Aorta (tissue), 5 donors: ENCODE measurements at regions of chr5 and their contacts with region 1.

Region 1: DNA sequence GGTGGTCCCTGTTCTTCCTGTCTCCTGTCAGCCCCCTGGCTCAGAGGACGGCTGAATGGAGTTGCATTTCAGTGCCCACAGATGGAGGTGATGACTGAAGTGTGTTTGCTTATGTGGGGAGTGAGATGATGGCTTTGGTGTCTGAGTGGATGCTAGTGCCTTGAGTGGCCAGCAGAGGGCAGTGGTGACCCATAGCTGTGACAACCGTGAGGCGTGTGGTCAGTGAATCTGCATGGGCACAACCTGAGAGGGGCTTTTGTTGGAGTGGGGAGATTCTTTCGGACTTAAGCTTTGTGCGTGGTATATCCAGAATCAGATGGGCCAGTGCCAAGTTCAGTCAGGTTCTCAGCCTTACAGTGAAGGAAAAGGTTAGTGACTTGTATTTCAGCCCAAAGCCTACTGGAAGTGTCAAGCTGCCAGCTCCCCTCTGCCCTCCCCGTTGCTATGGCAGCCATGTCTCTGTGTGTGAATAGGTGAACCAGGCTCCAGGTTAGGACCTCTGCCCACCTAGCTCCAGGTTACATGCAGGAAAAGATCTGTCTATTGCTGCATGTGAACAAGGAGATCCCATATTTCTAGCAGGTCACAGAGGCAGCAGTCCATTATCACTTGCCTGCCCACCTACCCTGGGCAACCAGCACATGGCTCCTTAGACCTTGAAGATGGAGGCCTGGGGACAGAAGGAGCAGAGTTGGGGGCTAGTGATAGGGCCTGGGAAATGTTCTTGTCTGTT is 14.7 kb upstream of the CXXC5 start:
- DNase-seq: peak; percentile 74 to 90
- ATAC-seq: peak; percentile 73
- H3K4me3 ChIP-seq: no peak overlapping the region
- H3K27ac ChIP-seq: no peak overlapping the region
- H3K4me1 ChIP-seq: peaks cover 0 to 2% of the 10 kb centered on the region in 2 donors
- H3K27me3 ChIP-seq: no peaks in the 10 kb centered on the region

Region 2: GRCh38 chr5:139551191-139551889 is 82.1 kb before region 1 on chr5:
- intact Hi-C with region 1: no loop called
- DNase-seq: no peak
- ATAC-seq: no peak
- H3K4me3 ChIP-seq: no peak overlapping the region
- H3K27ac ChIP-seq: no peak overlapping the region
- H3K4me1 ChIP-seq: no peaks in the 10 kb centered on the region
- H3K27me3 ChIP-seq: no peaks in the 10 kb centered on the region

Region 3: GRCh38 chr5:139646912-139647505 is 13.5 kb after region 1 on chr5:
- intact Hi-C with region 1: loop called (anchors 1 kb)
- DNase-seq: peak; percentile 61 to 76
- ATAC-seq: no peak
- H3K4me3 ChIP-seq: no peak overlapping the region
- H3K27ac ChIP-seq: no peak overlapping the region
- H3K4me1 ChIP-seq: no peaks in the 10 kb centered on the region
- H3K27me3 ChIP-seq: no peaks in the 10 kb centered on the region

Region 4: GRCh38 chr5:139678751-139679750 is 45.6 kb after region 1 on chr5:
- intact Hi-C with region 1: loop called in 1 of 2 experiments (anchors 5 kb)
- DNase-seq: no peak
- ATAC-seq: peak; percentile 12
- H3K4me3 ChIP-seq: no peak overlapping the region
- H3K27ac ChIP-seq: no peak overlapping the region
- H3K4me1 ChIP-seq: no peaks in the 10 kb centered on the region
- H3K27me3 ChIP-seq: no peaks in the 10 kb centered on the region

Region 5: GRCh38 chr5:139696894-139697658 is 63.6 kb after region 1 on chr5:
- intact Hi-C with region 1: loop called in 1 of 2 experiments (anchors 2 kb)
- DNase-seq: peak; percentile 92 to 93
- ATAC-seq: peak; percentile 87
- H3K4me3 ChIP-seq: peak overlapping the region; percentile 1 to 2
- H3K27ac ChIP-seq: peak overlapping the region; percentile 60 to 74
- H3K4me1 ChIP-seq: no peaks in the 10 kb centered on the region
- H3K27me3 ChIP-seq: no peaks in the 10 kb centered on the region

Region 6: GRCh38 chr5:139765409-139766217 is 132.2 kb after region 1 on chr5:
- intact Hi-C with region 1: loop called (anchors 1 kb)
- DNase-seq: peak; percentile 85 to 95
- ATAC-seq: peak; percentile 95
- H3K4me3 ChIP-seq: peak overlapping the region in 1 of 2 donors; percentile 30
- H3K27ac ChIP-seq: no peak overlapping the region
- H3K4me1 ChIP-seq: no peaks in the 10 kb centered on the region
- H3K27me3 ChIP-seq: no peaks in the 10 kb centered on the region